ENCODE measurements at regions of chr11 and their contacts with region 1.

Region 1: DNA sequence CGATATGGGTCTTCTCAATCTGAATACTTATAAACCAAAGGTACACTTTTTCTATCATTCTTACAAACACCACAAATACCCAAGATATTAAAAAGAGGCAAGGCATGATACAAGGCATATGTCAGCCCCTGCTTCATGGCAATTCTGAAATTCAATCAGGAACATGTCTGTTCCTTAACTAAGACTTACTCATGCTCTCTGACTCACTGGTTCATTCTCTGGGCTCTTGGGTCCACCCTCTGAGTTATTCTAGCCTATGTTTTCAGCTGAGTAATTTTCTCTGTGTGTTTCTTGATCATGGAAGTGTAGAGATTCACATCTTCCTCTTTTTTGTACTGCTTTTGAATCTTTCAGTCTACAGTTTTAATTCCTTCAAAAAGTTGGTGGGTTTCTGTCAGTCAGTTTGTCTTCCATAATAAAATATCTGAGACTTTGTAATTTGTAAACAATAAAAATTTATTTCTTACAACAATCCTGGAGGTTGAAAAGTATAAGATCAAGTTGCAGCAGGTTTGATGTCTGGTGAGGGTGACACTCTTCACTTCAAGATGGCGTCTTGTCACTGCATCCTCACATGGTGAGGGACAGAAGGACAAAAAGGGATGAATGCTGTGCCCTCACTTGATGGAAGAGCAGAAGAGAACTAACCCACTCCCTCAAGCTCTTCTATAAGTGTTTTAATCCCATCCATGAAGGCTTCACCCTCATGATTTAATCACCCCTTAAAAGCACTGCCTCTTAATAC is 211.7 kb downstream of the FAM76B start:
- DNase-seq: no peak
- ATAC-seq: peak; percentile 85
- H3K4me3 ChIP-seq: no peak overlapping the region
- H3K27ac ChIP-seq: no peak overlapping the region
- H3K4me1 ChIP-seq: no peaks in the 10 kb centered on the region
- H3K27me3 ChIP-seq: no peaks in the 10 kb centered on the region
- CTCF ChIP-seq: peak; percentile 10 to 23 (median 11); a peak in 2 of 6 replicates
- EP300 ChIP-seq: no peak
- POLR2A ChIP-seq: no peak
- RAD21 ChIP-seq: peak; percentile 45; the same call in 1 of the 2 replicates

Region 2: GRCh38 chr11:95415837-95416304 is 162.0 kb before region 1 on chr11:
- CTCF ChIA-PET with region 1: no interaction called
- POLR2A ChIA-PET with region 1: no interaction called
- RAD21 ChIA-PET with region 1: no interaction called
- SMC1A ChIA-PET with region 1: no interaction called
- in situ Hi-C with region 1: no loop called
- intact Hi-C with region 1: no loop called
- DNase-seq: no peak
- ATAC-seq: peak; percentile 36; the same call in 2 of the 3 replicates
- H3K4me3 ChIP-seq: no peak overlapping the region
- H3K27ac ChIP-seq: no peak overlapping the region
- H3K4me1 ChIP-seq: no peaks in the 10 kb centered on the region
- H3K27me3 ChIP-seq: no peaks in the 10 kb centered on the region
- CTCF ChIP-seq: no peak
- EP300 ChIP-seq: no peak
- POLR2A ChIP-seq: no peak
- RAD21 ChIP-seq: no peak

Region 3: DNA sequence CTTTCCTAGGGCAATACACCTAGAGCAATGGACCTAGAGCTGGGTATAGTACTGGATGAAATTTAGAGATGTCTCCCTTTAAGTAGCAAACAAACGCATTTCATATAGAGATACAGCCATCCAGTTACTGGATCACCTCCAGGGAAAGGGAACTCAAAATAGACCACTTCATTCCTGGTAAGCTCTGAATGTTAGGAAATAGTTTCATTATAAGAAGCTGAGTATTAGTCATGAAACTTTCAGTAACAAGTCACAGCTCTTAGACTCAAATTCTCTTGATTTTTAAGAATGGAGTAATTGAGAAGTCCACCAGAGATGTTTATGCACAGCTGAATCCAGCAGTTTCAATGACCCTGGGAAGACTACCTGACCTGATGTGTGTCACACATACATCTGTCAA is 10.2 kb before region 1 on chr11:
- CTCF ChIA-PET with region 1: interaction called, 3 read pairs
- POLR2A ChIA-PET with region 1: interaction called, 5 read pairs
- RAD21 ChIA-PET with region 1: interaction called, 3 read pairs
- SMC1A ChIA-PET with region 1: interaction called, 12 read pairs
- in situ Hi-C with region 1: no loop called
- intact Hi-C with region 1: no loop called
- DNase-seq: no peak
- ATAC-seq: no peak
- H3K4me3 ChIP-seq: no peak overlapping the region
- H3K27ac ChIP-seq: no peak overlapping the region
- H3K4me1 ChIP-seq: no peaks in the 10 kb centered on the region
- H3K27me3 ChIP-seq: no peaks in the 10 kb centered on the region
- CTCF ChIP-seq: no peak
- EP300 ChIP-seq: no peak
- POLR2A ChIP-seq: no peak
- RAD21 ChIP-seq: no peak

Measured in GM12878 (cell line).